ENCODE measurements at regions of chr11 and their contacts with region 1.

Region 1: DNA sequence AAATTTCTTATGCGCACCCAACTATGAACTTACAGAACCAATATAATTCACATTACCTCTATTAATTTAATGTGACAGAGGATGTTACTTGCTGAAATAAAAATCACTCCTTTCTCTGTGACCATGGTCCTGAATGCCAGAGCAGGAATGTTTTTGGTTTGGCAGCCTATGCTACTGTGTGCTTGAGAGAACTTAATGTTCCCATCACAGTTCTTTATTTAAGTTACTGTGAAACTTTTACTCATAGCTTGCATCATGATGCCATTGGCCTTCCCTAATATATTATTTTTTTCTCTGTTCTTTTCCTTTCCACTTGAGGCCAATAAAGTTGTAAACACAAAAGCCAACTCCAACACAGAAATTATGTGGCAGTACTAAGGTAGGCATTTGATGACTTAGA is 142.2 kb downstream of the FAM76B start:
- DNase-seq: peak in 1 of 2 donors; percentile 79
- H3K4me3 ChIP-seq: peak overlapping the region; percentile 20 to 44
- H3K27ac ChIP-seq: peak overlapping the region; percentile 88 to 89
- H3K4me1 ChIP-seq: peaks cover 2 to 27% of the 10 kb centered on the region in 2 donors
- H3K27me3 ChIP-seq: no peaks in the 10 kb centered on the region
- CTCF ChIP-seq: no peak

Region 2: DNA sequence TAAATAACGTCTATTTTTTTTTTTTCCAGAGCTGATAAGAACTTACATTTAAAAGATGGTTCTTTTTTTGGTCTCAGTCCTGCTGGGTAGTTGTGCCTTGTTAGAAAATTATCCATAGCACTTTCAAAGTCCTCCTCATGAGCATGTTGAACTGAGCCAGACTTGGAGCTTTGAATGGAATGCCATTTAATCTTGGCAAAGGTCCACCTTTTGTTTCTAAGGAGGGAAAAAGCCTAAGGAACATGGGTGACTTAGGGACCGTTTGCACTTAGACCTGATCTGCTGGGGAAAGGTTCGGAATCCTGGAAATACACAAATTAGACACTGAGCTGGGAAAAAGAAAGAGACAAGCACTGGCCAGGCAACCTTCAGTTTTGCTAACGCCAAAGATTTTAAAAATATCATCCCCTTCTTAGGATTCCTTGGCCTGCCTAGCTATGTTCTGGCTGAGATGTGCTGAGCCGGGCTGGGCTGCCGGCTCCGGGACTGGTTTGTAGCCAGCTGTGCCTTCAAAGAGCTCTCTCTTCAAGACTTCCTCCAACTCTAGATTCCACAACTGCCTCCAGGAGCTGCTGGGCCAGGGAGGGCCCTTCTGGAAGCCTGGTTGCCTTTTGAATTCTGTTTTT is 490.3 kb before region 1 on chr11:
- intact Hi-C with region 1: loop called (anchors 5 kb)
- DNase-seq: peak in 1 of 2 donors; percentile 79
- H3K4me3 ChIP-seq: peak overlapping the region in 1 of 2 donors; percentile 26
- H3K27ac ChIP-seq: peak overlapping the region; percentile 78 to 86
- H3K4me1 ChIP-seq: peaks cover 2 to 13% of the 10 kb centered on the region in 2 donors
- H3K27me3 ChIP-seq: no peaks in the 10 kb centered on the region
- CTCF ChIP-seq: no peak

Region 3: DNA sequence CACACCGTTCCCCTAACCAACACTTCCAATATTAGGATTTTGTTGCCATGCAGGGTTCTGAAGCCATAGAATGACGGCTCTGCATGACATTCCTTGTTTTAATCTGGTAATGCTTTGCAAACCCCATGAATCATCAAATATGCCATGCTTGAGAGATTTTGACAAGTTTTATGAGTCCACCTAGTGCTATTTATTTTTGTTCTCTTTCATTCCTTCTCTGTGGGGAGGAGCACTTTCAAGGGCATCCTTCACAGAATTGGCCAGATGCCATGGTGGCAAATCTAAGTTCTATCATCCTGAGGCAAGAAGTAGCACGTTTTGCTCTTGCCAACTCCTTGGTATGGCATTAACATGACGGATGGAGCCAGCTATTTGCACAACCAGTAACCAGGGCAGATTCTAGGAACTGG is 126.2 kb before region 1 on chr11:
- intact Hi-C with region 1: loop called (anchors 5 kb)
- DNase-seq: no peak
- H3K4me3 ChIP-seq: no peak overlapping the region
- H3K27ac ChIP-seq: no peak overlapping the region
- H3K4me1 ChIP-seq: no peaks in the 10 kb centered on the region
- H3K27me3 ChIP-seq: no peaks in the 10 kb centered on the region
- CTCF ChIP-seq: no peak

Region 4: GRCh38 chr11:95577716-95578460 is 69.5 kb before region 1 on chr11:
- intact Hi-C with region 1: loop called (anchors 5 kb)
- DNase-seq: peak in 1 of 2 donors; percentile 67
- H3K4me3 ChIP-seq: no peak overlapping the region
- H3K27ac ChIP-seq: no peak overlapping the region
- H3K4me1 ChIP-seq: peaks cover 0 to 21% of the 10 kb centered on the region in 2 donors
- H3K27me3 ChIP-seq: no peaks in the 10 kb centered on the region
- CTCF ChIP-seq: no peak

Region 5: GRCh38 chr11:95699631-95700470 is 52.5 kb after region 1 on chr11:
- intact Hi-C with region 1: loop called (anchors 5 kb)
- DNase-seq: no peak
- H3K4me3 ChIP-seq: no peak overlapping the region
- H3K27ac ChIP-seq: peak overlapping the region in 1 of 2 donors; percentile 45
- H3K4me1 ChIP-seq: peaks cover 0 to 14% of the 10 kb centered on the region in 2 donors
- H3K27me3 ChIP-seq: no peaks in the 10 kb centered on the region
- CTCF ChIP-seq: no peak